Heart left ventricle (tissue), 16 donors: ENCODE measurements at regions of chr11 and their contacts with region 1.

Region 1: GRCh38 chr11:30855383-30856006 is 269.3 kb upstream of the MPPED2 start:
- DNase-seq: no peak
- ATAC-seq: no peak
- H3K4me3 ChIP-seq: no peak overlapping the region
- H3K27ac ChIP-seq: no peak overlapping the region
- H3K4me1 ChIP-seq: peaks cover 0 to 4% (median 0%) of the 10 kb centered on the region in 12 donors
- H3K27me3 ChIP-seq: no peaks in the 10 kb centered on the region
- CTCF ChIP-seq: peak in 11 of 12 donors; percentile 32 to 73 (median 59)
- POLR2A ChIP-seq: no peak

Region 2: DNA sequence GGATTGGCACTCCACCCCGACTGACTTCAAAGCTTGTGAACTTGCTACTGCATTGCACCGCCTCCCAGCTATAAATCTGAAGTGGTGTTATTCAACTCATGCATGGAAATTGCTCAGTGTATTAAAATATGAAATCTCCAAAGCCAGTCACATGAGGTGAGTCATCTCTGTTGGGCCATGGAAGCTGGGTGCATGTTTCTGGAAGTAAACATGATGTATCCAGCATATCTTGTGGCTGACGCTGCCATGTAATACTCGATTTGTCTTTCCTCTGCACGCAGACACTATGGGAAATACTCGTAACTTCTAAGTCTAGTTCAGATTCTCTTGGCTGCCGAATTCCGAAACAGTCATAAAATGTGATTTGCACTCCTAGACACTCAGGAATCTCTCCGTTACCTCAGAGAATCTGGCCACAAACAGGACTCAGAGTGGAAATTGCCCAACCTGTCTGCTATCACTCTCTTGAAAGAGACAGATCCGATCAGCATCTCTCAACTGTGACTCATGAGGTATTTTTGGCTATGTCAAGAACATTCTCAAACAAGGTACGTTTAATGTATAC is 114.4 kb before region 1 on chr11:
- intact Hi-C with region 1: loop called in 1 of 10 experiments (anchors 10 kb)
- DNase-seq: no peak
- ATAC-seq: no peak
- H3K4me3 ChIP-seq: no peak overlapping the region
- H3K27ac ChIP-seq: no peak overlapping the region
- H3K4me1 ChIP-seq: no peaks in the 10 kb centered on the region
- H3K27me3 ChIP-seq: no peaks in the 10 kb centered on the region
- CTCF ChIP-seq: no peak
- POLR2A ChIP-seq: no peak

Region 3: GRCh38 chr11:30984442-30984816 is 128.9 kb after region 1 on chr11:
- intact Hi-C with region 1: no loop called
- DNase-seq: peak in 4 of 5 donors; percentile 18 to 44 (median 26)
- ATAC-seq: peak; percentile 37 to 79 (median 62)
- H3K4me3 ChIP-seq: no peak overlapping the region
- H3K27ac ChIP-seq: peak overlapping the region in 4 of 12 donors; percentile 45 to 64 (median 54)
- H3K4me1 ChIP-seq: no peaks in the 10 kb centered on the region
- H3K27me3 ChIP-seq: no peaks in the 10 kb centered on the region
- CTCF ChIP-seq: no peak
- POLR2A ChIP-seq: no peak